B cell (primary cell): ENCODE measurements at regions of chr4 and their contacts with region 1.

Region 1: GRCh38 chr4:114603497-114603896 is 4.9 kb downstream of the UGT8 start:
- DNase-seq: peak; percentile 86
- ATAC-seq: peak; percentile 71
- H3K4me3 ChIP-seq: peak overlapping the region in 2 of 5 experiments; percentile 20 to 43
- H3K4me3 Mint-ChIP-seq: no peak overlapping the region
- H3K27ac ChIP-seq: peak overlapping the region; percentile 67 to 93
- H3K27ac Mint-ChIP-seq: no peak overlapping the region
- H3K4me1 ChIP-seq: peaks cover 47 to 65% of the 10 kb centered on the region in 2 donors
- H3K4me1 Mint-ChIP-seq: peaks cover 23% of the 10 kb centered on the region
- H3K27me3 ChIP-seq: no peaks in the 10 kb centered on the region
- H3K27me3 Mint-ChIP-seq: no peaks in the 10 kb centered on the region
- CTCF ChIP-seq: no peak

Region 2: GRCh38 chr4:114615436-114615885 is 12.0 kb after region 1 on chr4:
- CTCF ChIA-PET with region 1: interaction called, 3 read pairs
- POLR2A ChIA-PET with region 1: no interaction called
- intact Hi-C with region 1: loop called (anchors 2 kb)
- DNase-seq: no peak
- ATAC-seq: no peak
- H3K4me3 ChIP-seq: no peak overlapping the region
- H3K4me3 Mint-ChIP-seq: no peak overlapping the region
- H3K27ac ChIP-seq: no peak overlapping the region
- H3K27ac Mint-ChIP-seq: no peak overlapping the region
- H3K4me1 ChIP-seq: peaks cover 4 to 10% of the 10 kb centered on the region in 2 donors
- H3K4me1 Mint-ChIP-seq: peaks cover 35% of the 10 kb centered on the region
- H3K27me3 ChIP-seq: no peaks in the 10 kb centered on the region
- H3K27me3 Mint-ChIP-seq: no peaks in the 10 kb centered on the region
- CTCF ChIP-seq: no peak